Activated naive CD4-positive, alpha-beta T cell treated with anti-CD3 and anti-CD28 coated beads for 36 hours (primary cell): ENCODE measurements at regions of chr1 and their contacts with region 1.

Region 1: GRCh38 chr1:39666772-39667171 is 5.1 kb downstream of the NT5C1A start:
- DNase-seq: peak; percentile 77
- H3K4me3 Mint-ChIP-seq: no peak overlapping the region
- H3K27ac Mint-ChIP-seq: peak overlapping the region; percentile 42
- H3K4me1 Mint-ChIP-seq: peaks cover 23% of the 10 kb centered on the region
- H3K27me3 Mint-ChIP-seq: peaks cover 32% of the 10 kb centered on the region

Region 2: GRCh38 chr1:39398278-39399021 is 268.3 kb before region 1 on chr1:
- CTCF ChIA-PET with region 1: no interaction called
- intact Hi-C with region 1: loop called (anchors 10 kb)
- DNase-seq: peak; percentile 58
- H3K4me3 Mint-ChIP-seq: no peak overlapping the region
- H3K27ac Mint-ChIP-seq: peak overlapping the region; percentile 68
- H3K4me1 Mint-ChIP-seq: peaks cover 63% of the 10 kb centered on the region
- H3K27me3 Mint-ChIP-seq: no peaks in the 10 kb centered on the region

Region 3: GRCh38 chr1:39639305-39640130 is 27.3 kb before region 1 on chr1 and contains the start of gene HEYL:
- CTCF ChIA-PET with region 1: no interaction called
- intact Hi-C with region 1: no loop called
- DNase-seq: peak; percentile 76
- H3K4me3 Mint-ChIP-seq: peak within 1 kb of the TSS; percentile 52
- H3K27ac Mint-ChIP-seq: no peak within 1 kb of the TSS
- H3K4me1 Mint-ChIP-seq: no peaks in the 10 kb centered on the region
- H3K27me3 Mint-ChIP-seq: peaks cover 14% of the 10 kb centered on the region
- total RNA-seq, gene HEYL: 0.15 to 0.17 TPM